ENCODE measurements at regions of chr1 and their contacts with region 1.

Region 1: DNA sequence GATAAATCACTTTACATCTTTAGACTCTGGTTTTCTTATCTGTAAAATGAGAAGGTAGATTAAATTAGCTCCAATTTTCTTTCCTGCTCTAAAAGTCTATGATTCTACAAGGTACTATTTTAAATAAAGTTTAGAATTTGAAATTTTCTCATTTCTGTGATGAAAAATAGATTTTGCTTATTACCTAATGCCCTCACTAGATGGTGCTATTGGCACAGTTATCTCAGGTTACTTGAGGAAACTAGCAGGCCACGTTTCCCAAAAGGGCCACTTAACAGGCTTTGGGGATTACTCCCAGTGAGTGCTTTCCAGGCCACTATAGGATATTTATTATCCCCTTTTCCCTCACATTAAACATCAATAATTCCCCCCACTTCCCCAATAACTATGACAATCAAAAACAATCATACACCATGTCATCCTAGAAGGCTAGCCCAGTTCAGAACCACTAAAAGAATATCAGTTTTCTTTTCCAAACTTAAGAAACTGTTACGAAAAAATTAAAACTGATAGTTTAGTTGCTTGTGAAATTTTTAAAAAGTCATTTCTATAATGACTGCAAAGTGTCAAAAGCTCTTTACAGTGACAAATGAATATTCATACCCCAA is 30.6 kb downstream of the OMA1 start:
- DNase-seq: peak; percentile 41
- H3K4me3 ChIP-seq: no peak overlapping the region
- CTCF ChIP-seq: peak; percentile 39

Region 2: DNA sequence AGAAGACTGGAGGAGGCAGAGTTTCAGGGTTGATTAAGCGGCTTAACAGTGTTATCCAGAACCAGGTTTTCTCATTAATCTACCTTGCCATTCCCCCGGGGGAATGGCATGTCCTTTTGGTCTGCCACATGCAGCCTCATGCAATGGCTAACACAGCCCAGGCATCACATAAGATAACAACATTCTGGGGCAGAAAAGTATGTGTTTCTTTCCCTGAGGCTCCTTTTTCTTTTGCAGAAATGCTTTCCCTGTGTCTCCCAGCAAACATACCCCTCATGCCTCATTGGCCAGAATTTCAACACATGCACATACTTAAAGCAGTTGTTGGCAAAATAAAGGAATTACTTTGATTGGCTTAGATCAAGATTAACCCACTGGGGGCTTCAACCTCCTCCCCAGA is 68.0 kb before region 1 on chr1:
- CTCF ChIA-PET with region 1: no interaction called
- POLR2A ChIA-PET with region 1: no interaction called
- DNase-seq: peak; percentile 42
- H3K4me3 ChIP-seq: no peak overlapping the region
- CTCF ChIP-seq: no peak

Region 3: DNA sequence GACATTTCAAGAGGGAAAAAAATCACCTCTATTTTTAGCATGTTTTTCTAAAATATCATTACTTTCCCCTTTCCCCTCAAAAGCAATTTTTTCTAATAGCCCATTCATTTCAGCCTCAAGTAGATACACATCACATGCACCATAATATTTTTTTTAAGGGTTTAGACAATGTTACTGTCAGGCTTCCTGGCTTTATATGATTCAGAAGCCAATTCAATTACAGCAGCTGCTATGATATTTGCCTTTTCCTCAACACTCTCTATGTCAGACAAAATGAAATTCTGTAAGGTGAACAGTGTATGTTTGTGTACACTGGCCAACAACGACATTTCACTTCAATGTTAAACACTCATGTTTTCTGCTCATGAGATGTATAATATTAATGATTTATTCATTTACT is 15.9 kb before region 1 on chr1:
- CTCF ChIA-PET with region 1: interaction called, 16 read pairs
- POLR2A ChIA-PET with region 1: no interaction called
- DNase-seq: no peak
- H3K4me3 ChIP-seq: no peak overlapping the region
- CTCF ChIP-seq: no peak

Region 4: GRCh38 chr1:58528518-58528917 is 12.6 kb after region 1 on chr1:
- CTCF ChIA-PET with region 1: interaction called, 70 read pairs
- POLR2A ChIA-PET with region 1: no interaction called
- DNase-seq: no peak
- H3K4me3 ChIP-seq: no peak overlapping the region
- CTCF ChIP-seq: no peak

Region 5: DNA sequence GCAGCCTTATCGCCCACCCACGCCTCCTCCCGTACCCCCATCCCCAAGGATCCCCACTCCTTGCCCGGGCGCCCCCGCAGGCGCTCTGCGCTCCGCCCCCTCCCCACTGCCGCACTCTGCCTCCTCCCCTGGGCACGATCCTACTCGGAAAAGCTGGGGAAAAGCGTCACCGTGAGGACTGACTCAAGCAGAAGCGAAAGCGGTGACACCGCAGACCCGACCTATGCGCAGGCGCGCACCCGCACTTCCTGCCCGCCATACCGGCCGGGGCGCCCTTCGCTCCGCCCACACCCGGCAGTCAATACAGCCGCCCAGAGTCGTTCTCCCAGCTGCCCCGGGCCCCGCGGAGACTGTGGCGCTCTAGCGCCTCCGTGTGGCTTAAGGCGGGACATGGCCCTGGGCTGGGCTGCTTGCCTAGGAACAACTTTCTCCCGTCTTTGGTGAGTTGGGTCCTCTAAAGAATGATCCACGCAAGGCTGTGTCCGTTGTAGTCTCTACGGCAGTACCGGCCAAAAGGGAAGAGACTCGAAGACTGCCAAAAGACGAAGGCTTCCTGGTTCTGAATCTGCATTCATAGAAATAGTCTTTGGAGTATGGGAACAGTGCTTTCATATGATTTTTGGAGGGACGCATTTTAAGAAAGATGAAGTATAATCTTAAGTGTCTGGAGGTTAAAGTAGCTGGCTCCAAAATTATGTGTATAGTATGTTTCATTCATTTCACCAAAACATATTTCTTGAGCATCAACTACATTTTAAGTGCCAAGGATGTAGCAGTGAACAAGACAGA is 30.8 kb after region 1 on chr1 and contains the start of gene OMA1:
- CTCF ChIA-PET with region 1: interaction called, 48 read pairs
- POLR2A ChIA-PET with region 1: no interaction called
- DNase-seq: peak; percentile 86
- H3K4me3 ChIP-seq: peak within 1 kb of the TSS; percentile 77
- CTCF ChIP-seq: peak; percentile 96

Region 6: DNA sequence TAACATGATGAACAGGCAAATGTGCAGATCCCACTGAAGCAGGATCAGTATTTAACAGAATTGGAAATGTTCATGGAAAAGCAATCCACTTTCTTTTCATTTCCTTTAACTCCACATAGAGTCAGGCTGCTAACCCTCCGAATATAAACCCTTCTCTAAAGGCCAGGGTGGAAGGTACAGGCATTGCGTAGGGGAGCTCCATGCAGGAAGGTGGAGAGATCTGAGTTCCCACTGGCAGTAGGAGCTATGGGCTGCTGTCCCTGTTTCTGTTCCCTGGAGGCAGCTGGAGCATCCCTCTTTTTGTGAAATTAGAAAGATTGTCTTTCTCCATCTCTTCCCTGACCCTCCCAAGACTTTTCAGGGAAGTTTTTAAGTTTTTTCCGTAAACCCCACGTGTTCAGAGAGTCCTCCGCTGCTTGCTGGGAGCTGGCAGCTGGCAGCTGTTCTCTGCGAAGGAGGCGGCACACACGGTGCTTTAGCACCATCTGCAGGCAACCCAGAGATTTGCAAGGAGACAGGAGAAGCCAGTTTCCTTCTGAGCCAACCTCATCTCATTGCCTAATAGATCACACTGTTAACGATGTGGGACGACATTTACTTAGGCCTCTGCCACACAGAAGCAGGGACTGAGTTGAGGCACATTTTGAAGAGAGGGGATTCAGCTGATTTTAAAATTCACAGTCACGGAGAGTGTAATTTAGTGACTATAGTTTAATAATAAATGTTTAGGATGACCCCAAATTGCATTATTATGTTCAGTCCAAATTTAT is 1243.4 kb after region 1 on chr1:
- CTCF ChIA-PET with region 1: interaction called, 14 read pairs
- POLR2A ChIA-PET with region 1: no interaction called
- DNase-seq: peak; percentile 29
- H3K4me3 ChIP-seq: no peak overlapping the region
- CTCF ChIP-seq: peak; percentile 90